GM18951 (cell line): ENCODE measurements at regions of chr22 and their contacts with region 1.

Region 1: GRCh38 chr22:17057959-17058814 is 26.6 kb upstream of the IL17RA start:
- POLR2A ChIP-seq: no peak

Region 2: GRCh38 chr22:16922076-16922475 is 136.1 kb before region 1 on chr22:
- in situ Hi-C with region 1: loop called (anchors 10 kb)
- POLR2A ChIP-seq: no peak